ENCODE measurements at regions of chr19 and their contacts with region 1.

Region 1: GRCh38 chr19:44570984-44571684 is 41.7 kb upstream of the CEACAM20 start:
- DNase-seq: peak; percentile 65 to 73 (median 71)
- H3K4me3 ChIP-seq: no peak overlapping the region
- H3K4me3 Mint-ChIP-seq: no peak overlapping the region
- H3K27ac ChIP-seq: no peak overlapping the region
- H3K27ac Mint-ChIP-seq: peak overlapping the region in 2 of 7 donors; percentile 17 to 36
- H3K4me1 ChIP-seq: peaks cover 15 to 21% of the 10 kb centered on the region in 2 donors
- H3K4me1 Mint-ChIP-seq: peaks cover 18% of the 10 kb centered on the region
- H3K27me3 ChIP-seq: no peaks in the 10 kb centered on the region
- H3K27me3 Mint-ChIP-seq: peaks cover 2 to 16% (median 6%) of the 10 kb centered on the region in 3 donors
- CTCF ChIP-seq: peak; percentile 89

Region 2: DNA sequence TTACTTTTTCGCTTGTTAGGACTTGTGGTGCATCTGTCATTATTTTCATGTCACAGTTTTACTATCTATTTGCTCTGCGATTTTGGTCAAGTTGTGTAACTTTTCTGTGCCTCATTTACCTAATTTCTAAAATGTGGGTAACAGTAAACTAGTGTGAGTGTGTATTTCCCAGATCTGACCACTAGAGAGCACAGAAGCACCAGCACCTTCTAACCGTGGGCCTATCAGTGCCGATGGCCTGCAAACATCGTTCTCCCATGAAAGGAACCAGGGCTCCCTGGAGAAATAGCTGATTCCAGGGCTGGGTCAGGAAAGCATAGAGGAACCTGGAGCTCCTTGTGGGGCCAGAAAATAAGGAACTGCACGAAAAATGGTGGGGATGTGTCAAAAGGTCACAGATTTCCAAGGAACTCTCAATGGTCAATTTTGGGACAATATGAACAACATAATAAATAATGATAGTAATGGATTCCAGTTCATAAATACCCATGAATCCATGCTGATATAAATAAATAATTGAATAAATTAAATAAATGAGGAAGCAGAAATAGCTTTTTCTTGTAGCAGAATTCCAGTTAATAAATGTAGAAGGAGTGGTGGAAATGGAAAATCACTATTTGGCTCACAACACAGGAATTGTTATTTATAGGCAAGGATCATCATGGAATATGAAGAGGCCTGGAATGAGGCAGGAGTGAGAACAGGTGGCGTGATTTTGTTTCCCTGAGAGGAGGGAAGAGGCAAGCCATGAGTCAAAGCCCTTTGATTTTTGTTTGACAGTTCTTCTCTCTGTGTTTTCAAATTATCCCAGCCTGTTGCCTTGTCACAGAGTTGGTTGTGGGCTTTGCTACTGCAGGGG is 2007.6 kb before region 1 on chr19:
- intact Hi-C with region 1: loop called in 1 of 2 experiments (anchors 10 kb)
- DNase-seq: peak; percentile 30 to 51 (median 50)
- H3K4me3 ChIP-seq: no peak overlapping the region
- H3K4me3 Mint-ChIP-seq: no peak overlapping the region
- H3K27ac ChIP-seq: no peak overlapping the region
- H3K27ac Mint-ChIP-seq: no peak overlapping the region
- H3K4me1 ChIP-seq: peaks cover 32 to 33% of the 10 kb centered on the region in 2 donors
- H3K4me1 Mint-ChIP-seq: peaks cover 43% of the 10 kb centered on the region
- H3K27me3 ChIP-seq: peaks cover 0 to 15% of the 10 kb centered on the region in 2 donors
- H3K27me3 Mint-ChIP-seq: peaks cover 17 to 28% (median 23%) of the 10 kb centered on the region in 3 donors
- CTCF ChIP-seq: peak; percentile 78

Region 3: DNA sequence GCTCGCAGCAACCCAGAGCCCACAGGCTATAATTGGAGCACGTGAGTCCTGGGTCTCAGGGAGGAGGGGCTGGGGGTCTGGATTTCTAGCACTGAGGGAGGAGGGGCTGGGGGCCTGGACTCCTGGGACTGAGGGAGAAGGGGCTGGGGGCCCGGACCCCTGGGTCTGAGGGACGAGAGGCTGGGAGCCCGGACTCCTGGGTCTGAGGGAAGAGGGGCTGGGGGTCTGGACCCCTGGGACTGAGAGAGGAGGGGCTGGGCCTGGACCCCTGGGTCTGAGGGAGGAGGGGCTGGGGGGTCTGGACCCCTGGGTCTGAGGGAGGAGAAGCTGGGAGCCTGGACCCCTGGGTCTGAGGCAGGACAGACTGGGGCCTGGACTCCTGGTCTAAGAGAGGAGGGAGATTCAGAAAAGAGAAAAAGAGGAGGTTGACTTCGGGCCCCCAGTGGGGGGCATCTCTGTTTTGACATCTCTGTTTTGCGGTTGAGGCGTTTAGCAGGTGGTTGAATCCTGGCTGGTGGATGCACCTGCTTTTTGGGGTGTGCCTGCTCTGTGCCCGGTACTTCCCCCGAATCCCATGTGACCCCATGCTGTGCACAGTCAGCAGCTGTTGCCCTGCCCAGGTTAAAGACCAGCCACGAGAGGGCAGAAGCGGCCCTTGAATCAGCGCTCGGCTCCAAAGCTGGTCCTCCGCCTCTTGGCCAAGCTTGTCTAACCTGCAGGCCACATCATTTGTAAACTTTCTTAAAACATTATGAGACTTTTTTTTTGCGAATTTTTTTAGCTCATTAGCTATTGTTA is 83.0 kb after region 1 on chr19:
- intact Hi-C with region 1: loop called (anchors 1 kb)
- DNase-seq: peak; percentile 78 to 87 (median 78)
- H3K4me3 ChIP-seq: no peak overlapping the region
- H3K4me3 Mint-ChIP-seq: no peak overlapping the region
- H3K27ac ChIP-seq: no peak overlapping the region
- H3K27ac Mint-ChIP-seq: peak overlapping the region in 4 of 7 donors; percentile 18 to 68 (median 62)
- H3K4me1 ChIP-seq: no peaks in the 10 kb centered on the region
- H3K4me1 Mint-ChIP-seq: peaks cover 8% of the 10 kb centered on the region
- H3K27me3 ChIP-seq: no peaks in the 10 kb centered on the region
- H3K27me3 Mint-ChIP-seq: peaks cover 0 to 2% (median 2%) of the 10 kb centered on the region in 3 donors
- CTCF ChIP-seq: peak; percentile 81

Region 4: GRCh38 chr19:44718441-44719261 is 147.5 kb after region 1 on chr19:
- intact Hi-C with region 1: loop called in 1 of 2 experiments (anchors 10 kb)
- DNase-seq: no peak
- H3K4me3 ChIP-seq: peak overlapping the region in 1 of 3 experiments; percentile 43
- H3K4me3 Mint-ChIP-seq: peak overlapping the region in 1 of 2 donors; percentile 42
- H3K27ac ChIP-seq: no peak overlapping the region
- H3K27ac Mint-ChIP-seq: peak overlapping the region in 3 of 7 donors; percentile 5 to 49 (median 37)
- H3K4me1 ChIP-seq: peaks cover 45 to 48% of the 10 kb centered on the region in 2 donors
- H3K4me1 Mint-ChIP-seq: peaks cover 46% of the 10 kb centered on the region
- H3K27me3 ChIP-seq: no peaks in the 10 kb centered on the region
- H3K27me3 Mint-ChIP-seq: peaks cover under 1 to 8% (median 6%) of the 10 kb centered on the region in 3 donors
- CTCF ChIP-seq: no peak

Region 5: DNA sequence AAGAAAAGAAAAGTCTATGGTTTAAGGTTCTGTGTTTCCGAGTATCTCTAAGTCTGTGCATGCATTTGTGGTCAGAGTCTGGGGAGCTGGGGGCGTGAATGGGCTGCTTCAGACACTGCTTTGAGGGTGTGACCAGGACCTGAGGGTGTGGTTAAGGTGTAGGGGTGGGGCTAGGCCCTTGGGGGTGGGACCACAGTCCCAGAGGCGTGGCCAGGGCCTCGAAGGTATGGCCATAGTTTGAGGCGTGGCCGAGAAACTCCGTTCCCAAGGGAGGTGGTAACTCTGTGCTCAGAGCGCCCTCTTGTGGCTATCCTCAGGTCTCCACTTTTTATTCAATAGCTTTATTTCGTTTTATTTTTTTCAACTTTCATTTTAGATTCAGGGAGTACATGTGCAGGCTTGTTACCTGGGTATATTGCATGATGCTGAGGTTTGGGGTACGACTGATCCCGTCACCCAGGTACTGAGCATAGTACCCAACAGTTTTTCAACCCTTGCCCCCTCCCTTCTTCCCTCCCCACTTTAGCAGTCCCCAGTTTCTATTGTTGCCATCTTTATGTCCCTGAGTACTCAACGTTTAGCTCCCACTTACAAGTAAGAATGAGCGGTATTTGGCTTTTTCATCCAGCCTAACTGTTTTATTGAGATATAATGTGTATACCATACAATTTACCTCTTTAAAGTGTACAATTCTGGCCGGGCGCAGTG is 199.6 kb after region 1 on chr19:
- intact Hi-C with region 1: loop called in 1 of 2 experiments (anchors 5 kb)
- DNase-seq: peak; percentile 94 to 99 (median 98)
- H3K4me3 ChIP-seq: peak overlapping the region in 1 of 3 experiments; percentile 46
- H3K4me3 Mint-ChIP-seq: peak overlapping the region; percentile 69 to 74
- H3K27ac ChIP-seq: peak overlapping the region in 1 of 2 donors; percentile 64
- H3K27ac Mint-ChIP-seq: peak overlapping the region; percentile 81 to 97 (median 93)
- H3K4me1 ChIP-seq: peaks cover 35 to 40% of the 10 kb centered on the region in 2 donors
- H3K4me1 Mint-ChIP-seq: peaks cover 40% of the 10 kb centered on the region
- H3K27me3 ChIP-seq: no peaks in the 10 kb centered on the region
- H3K27me3 Mint-ChIP-seq: peaks cover 0 to 23% (median 8%) of the 10 kb centered on the region in 3 donors
- CTCF ChIP-seq: peak; percentile 76

Region 6: GRCh38 chr19:44777715-44778347 is 206.7 kb after region 1 on chr19 and contains the start of gene CBLC:
- intact Hi-C with region 1: loop called (anchors 5 to 10 kb)
- DNase-seq: no peak
- H3K4me3 ChIP-seq: no peak within 1 kb of the TSS
- H3K4me3 Mint-ChIP-seq: peak within 1 kb of the TSS in 1 of 2 donors; percentile 60
- H3K27ac ChIP-seq: no peak within 1 kb of the TSS
- H3K27ac Mint-ChIP-seq: no peak within 1 kb of the TSS
- H3K4me1 ChIP-seq: no peaks in the 10 kb centered on the region
- H3K4me1 Mint-ChIP-seq: no peaks in the 10 kb centered on the region
- H3K27me3 ChIP-seq: peaks cover 0 to 7% of the 10 kb centered on the region in 2 donors
- H3K27me3 Mint-ChIP-seq: peaks cover 0 to 20% (median 5%) of the 10 kb centered on the region in 3 donors
- CTCF ChIP-seq: no peak
- polyA plus RNA-seq, gene CBLC: not detected

Region 7: GRCh38 chr19:44954824-44955586 is 383.9 kb after region 1 on chr19 and contains the start of gene CLPTM1:
- intact Hi-C with region 1: loop called in 1 of 2 experiments (anchors 5 kb)
- DNase-seq: peak; percentile 96 to 97 (median 97)
- H3K4me3 ChIP-seq: peak within 1 kb of the TSS; percentile 93 to 99 (median 94)
- H3K4me3 Mint-ChIP-seq: peak within 1 kb of the TSS; percentile 98 to 99
- H3K27ac ChIP-seq: peak within 1 kb of the TSS; percentile 89 to 93
- H3K27ac Mint-ChIP-seq: peak within 1 kb of the TSS; percentile 96 to 100 (median 100)
- H3K4me1 ChIP-seq: peaks cover 23 to 32% of the 10 kb centered on the region in 2 donors
- H3K4me1 Mint-ChIP-seq: peaks cover 35% of the 10 kb centered on the region
- H3K27me3 ChIP-seq: no peaks in the 10 kb centered on the region
- H3K27me3 Mint-ChIP-seq: peaks cover 0 to 2% (median 2%) of the 10 kb centered on the region in 3 donors
- CTCF ChIP-seq: no peak
- polyA plus RNA-seq, gene CLPTM1: 14.7 to 84.3 (median 20.0) TPM